Lower leg skin (tissue), 4 donors: ENCODE measurements at regions of chr7 and their contacts with region 1.

Region 1: DNA sequence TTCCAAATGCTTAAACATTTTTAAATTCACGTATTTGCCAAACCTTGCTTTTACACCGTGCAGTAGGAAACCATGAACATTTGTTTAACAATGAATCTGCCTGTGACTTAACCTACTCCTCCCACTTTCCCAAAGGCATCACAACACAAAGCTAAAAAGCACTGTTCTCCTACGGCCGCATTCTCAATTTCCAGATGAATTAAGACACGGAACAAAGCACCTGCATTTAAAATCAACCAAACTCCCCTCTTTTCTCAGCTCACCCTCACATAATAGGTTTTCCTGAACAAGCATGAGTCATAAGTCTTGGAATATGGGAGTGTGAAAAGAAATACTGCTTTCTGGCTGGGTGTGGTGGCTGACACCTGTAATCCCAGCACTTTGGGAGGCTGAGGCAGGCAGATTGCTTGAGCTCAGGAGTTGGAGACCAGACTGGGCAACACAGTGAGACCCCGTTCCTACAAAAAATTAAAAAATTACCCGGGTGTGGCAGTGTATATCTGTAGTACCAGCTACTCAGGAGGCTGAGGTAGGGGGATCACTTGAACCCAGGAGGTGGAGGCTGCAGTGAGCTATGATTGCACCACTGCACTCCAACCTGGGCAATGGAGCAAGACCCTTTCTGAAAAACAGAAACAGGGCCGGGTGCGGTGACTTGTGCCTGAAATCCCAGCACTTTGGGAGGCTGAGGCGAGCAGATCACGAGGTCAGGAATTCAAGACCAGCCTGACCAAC is 51.7 kb upstream of the CYTH3 start:
- DNase-seq: no peak
- H3K4me3 ChIP-seq: no peak overlapping the region
- CTCF ChIP-seq: no peak
- POLR2A ChIP-seq: no peak

Region 2: DNA sequence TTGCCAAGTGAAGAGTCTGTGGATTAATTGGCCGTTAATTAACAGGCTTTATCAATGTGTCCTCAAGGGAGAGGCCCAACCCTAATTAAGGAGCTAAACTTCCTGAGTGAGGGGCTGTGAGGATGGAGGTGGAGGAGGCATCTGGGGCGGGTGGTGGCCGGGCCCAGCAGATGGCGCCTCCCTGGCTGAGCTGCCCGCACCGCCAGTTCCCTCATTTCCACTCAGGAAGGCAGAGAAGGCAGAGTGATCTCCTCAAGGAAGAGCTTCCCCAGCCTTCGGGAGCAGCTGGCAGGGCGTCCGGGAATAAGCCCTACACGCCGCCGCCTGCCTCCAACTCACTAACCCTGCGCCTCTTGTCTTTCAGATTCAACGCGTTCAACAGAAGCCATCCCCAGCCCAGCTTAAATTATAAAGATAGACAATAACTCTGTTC is 163.9 kb before region 1 on chr7:
- intact Hi-C with region 1: loop called (anchors 10 kb)
- DNase-seq: peak; percentile 43 to 89
- H3K4me3 ChIP-seq: no peak overlapping the region
- CTCF ChIP-seq: no peak
- POLR2A ChIP-seq: no peak